ENCODE measurements at regions of chr18 and their contacts with region 1.

Region 1: GRCh38 chr18:55220523-55220922 is 261.3 kb upstream of the CCDC68 start:
- DNase-seq: no peak
- ATAC-seq: peak; percentile 57
- H3K4me3 Mint-ChIP-seq: no peak overlapping the region
- H3K27ac Mint-ChIP-seq: peak overlapping the region; percentile 72
- H3K4me1 Mint-ChIP-seq: peaks cover 39% of the 10 kb centered on the region
- H3K27me3 Mint-ChIP-seq: no peaks in the 10 kb centered on the region
- CTCF ChIP-seq: no peak

Region 2: DNA sequence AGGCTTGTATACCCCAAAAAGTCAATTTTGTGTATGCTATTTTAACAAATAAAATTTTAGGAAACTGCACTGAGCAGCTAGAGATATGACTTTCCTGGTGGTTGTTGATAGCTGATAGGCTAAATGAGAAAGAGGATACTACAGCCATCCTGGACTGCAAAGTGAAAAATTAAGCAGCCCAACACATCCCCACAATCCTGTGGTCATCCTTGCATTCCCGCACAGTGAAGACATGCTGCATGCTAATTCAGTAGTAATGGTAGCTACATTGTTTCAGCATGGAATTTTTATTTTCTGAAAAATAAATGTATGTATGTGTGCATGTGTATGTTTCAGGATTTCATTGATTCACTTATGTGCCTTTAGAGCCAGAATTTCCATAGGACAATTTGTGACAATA is 137.1 kb before region 1 on chr18:
- CTCF ChIA-PET with region 1: no interaction called
- POLR2A ChIA-PET with region 1: no interaction called
- intact Hi-C with region 1: no loop called
- DNase-seq: no peak
- ATAC-seq: no peak
- H3K4me3 Mint-ChIP-seq: no peak overlapping the region
- H3K27ac Mint-ChIP-seq: peak overlapping the region; percentile 27
- H3K4me1 Mint-ChIP-seq: peaks cover 34% of the 10 kb centered on the region
- H3K27me3 Mint-ChIP-seq: no peaks in the 10 kb centered on the region
- CTCF ChIP-seq: no peak

Region 3: GRCh38 chr18:55109818-55110414 is 110.6 kb before region 1 on chr18:
- CTCF ChIA-PET with region 1: no interaction called
- POLR2A ChIA-PET with region 1: no interaction called
- intact Hi-C with region 1: loop called (anchors 5 kb)
- DNase-seq: no peak
- ATAC-seq: no peak
- H3K4me3 Mint-ChIP-seq: no peak overlapping the region
- H3K27ac Mint-ChIP-seq: no peak overlapping the region
- H3K4me1 Mint-ChIP-seq: peaks cover 27% of the 10 kb centered on the region
- H3K27me3 Mint-ChIP-seq: no peaks in the 10 kb centered on the region
- CTCF ChIP-seq: no peak

Measured in activated B cell treated with CpG ODN at 0.5 μM for 24 hours (primary cell).